Esophagus muscularis mucosa (tissue), 4 donors: ENCODE measurements at regions of chr13 and their contacts with region 1.

Region 1: GRCh38 chr13:51158880-51159518 is 47.9 kb upstream of the C13orf42 start:
- DNase-seq: peak; percentile 82
- H3K4me3 ChIP-seq: no peak overlapping the region
- H3K27ac ChIP-seq: no peak overlapping the region
- H3K4me1 ChIP-seq: peaks cover 0 to 8% (median 7%) of the 10 kb centered on the region in 4 donors
- H3K27me3 ChIP-seq: no peaks in the 10 kb centered on the region
- CTCF ChIP-seq: no peak
- EP300 ChIP-seq: no peak
- POLR2A ChIP-seq: no peak

Region 2: DNA sequence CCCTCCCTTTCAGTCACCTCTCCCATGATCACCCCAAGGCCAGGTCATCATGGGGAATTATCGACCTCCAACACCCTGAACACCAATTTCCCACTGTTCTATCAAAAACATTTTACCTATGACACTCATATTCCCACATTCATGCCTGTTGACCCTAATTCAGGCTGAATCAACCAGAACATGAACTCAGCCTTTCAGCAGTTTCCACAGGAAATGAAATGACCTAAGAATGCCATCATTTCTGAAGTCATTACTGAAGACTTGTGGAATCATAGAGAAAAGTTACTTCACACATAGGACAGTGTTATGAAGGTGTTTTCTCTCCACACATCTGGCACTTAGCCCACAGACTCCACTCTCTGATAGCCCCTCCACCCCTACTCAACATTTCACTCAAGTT is 33.3 kb after region 1 on chr13:
- intact Hi-C with region 1: no loop called
- DNase-seq: peak; percentile 17
- H3K4me3 ChIP-seq: no peak overlapping the region
- H3K27ac ChIP-seq: no peak overlapping the region
- H3K4me1 ChIP-seq: no peaks in the 10 kb centered on the region
- H3K27me3 ChIP-seq: no peaks in the 10 kb centered on the region
- CTCF ChIP-seq: no peak
- EP300 ChIP-seq: no peak
- POLR2A ChIP-seq: no peak

Region 3: GRCh38 chr13:51202477-51203046 is 43.6 kb after region 1 on chr13:
- intact Hi-C with region 1: no loop called
- DNase-seq: peak; percentile 14
- H3K4me3 ChIP-seq: no peak overlapping the region
- H3K27ac ChIP-seq: no peak overlapping the region
- H3K4me1 ChIP-seq: peaks cover 0 to 11% (median 3%) of the 10 kb centered on the region in 4 donors
- H3K27me3 ChIP-seq: no peaks in the 10 kb centered on the region
- CTCF ChIP-seq: no peak
- EP300 ChIP-seq: no peak
- POLR2A ChIP-seq: no peak

Region 4: DNA sequence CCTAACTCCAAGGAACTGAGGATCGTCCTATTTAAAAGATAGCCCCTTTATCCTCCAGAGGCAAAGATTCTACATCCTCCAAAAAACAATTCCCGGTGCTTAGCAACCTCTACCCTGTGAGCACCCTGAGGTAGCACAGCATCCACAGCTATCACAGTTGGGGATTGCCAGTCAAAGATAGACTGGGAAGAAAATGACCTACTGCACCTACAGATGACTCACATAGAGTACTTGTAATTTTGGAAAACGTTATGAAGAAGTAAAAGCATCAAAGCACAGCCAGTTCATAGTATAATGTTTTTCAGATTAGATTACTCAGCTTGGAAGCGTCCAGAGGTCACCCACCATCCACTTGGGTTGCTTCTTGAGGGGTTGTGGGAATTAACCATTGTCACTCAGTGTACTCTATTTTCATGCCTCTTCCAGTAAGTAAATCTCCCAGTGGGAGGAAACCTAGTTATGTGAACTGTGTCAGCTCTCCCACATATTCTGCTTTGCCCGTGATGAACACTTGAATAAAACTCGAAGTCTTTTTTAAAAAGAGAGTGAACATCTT is 54.3 kb after region 1 on chr13:
- intact Hi-C with region 1: loop called (anchors 5 kb)
- DNase-seq: no peak
- H3K4me3 ChIP-seq: no peak overlapping the region
- H3K27ac ChIP-seq: no peak overlapping the region
- H3K4me1 ChIP-seq: no peaks in the 10 kb centered on the region
- H3K27me3 ChIP-seq: peaks cover 0 to 26% (median 2%) of the 10 kb centered on the region in 4 donors
- CTCF ChIP-seq: no peak
- EP300 ChIP-seq: no peak
- POLR2A ChIP-seq: no peak